Vagina (tissue), 2 donors: ENCODE measurements at regions of chr7 and their contacts with region 1.

Region 1: DNA sequence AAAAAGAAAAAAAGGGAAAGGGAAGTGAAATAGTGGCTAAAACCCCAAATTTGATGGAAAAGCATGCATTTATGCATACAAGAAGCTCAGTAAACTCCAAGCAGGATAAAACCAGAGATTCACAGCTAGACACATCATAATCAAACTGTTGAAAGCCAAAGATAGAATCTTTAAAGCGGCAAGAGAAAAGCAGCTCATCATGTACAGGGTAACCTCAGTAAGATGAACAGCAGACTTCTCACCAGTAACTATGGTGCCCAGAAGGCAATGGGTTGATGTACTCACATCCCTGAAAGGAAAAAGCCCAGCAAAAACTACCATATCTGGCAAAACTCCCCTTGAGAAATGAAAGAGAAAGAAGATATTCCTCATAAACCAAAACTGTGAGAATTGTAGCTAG is 60.4 kb downstream of the TPST1 start:
- DNase-seq: no peak
- H3K4me3 ChIP-seq: no peak overlapping the region
- H3K27ac ChIP-seq: peak overlapping the region; percentile 79
- H3K4me1 ChIP-seq: peaks cover 30% of the 10 kb centered on the region
- H3K27me3 ChIP-seq: no peaks in the 10 kb centered on the region
- CTCF ChIP-seq: no peak
- POLR2A ChIP-seq: no peak

Region 2: GRCh38 chr7:64313740-64314491 is 1951.7 kb before region 1 on chr7 and contains the start of gene ZNF736:
- intact Hi-C with region 1: no loop called
- DNase-seq: peak in 1 of 2 donors; percentile 95
- H3K4me3 ChIP-seq: peak within 1 kb of the TSS; percentile 51 to 74
- H3K27ac ChIP-seq: peak within 1 kb of the TSS; percentile 71
- H3K4me1 ChIP-seq: peaks cover 30% of the 10 kb centered on the region
- H3K27me3 ChIP-seq: no peaks in the 10 kb centered on the region
- CTCF ChIP-seq: no peak
- POLR2A ChIP-seq: peak in 1 of 2 donors; percentile 16
- total RNA-seq, gene ZNF736: 11.3 TPM

Region 3: DNA sequence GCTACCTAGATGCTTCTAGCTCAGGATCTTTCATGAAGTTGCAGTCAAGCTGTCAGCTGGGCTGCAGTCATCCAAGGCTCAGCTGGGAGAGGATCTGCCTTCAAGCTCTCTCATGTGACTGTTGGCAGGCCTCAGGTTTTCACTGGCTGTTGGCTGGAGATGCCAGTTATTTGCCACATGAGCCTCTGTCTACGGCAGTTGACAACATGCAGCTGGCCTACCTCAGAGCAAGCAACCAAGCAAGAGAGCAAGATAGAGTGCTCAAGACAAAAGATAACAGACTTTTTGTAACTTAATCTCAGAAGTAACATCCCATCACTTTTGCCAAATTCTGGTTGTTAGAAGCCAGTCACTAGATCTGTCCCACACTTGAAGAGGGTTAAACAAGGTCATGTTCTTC is 65.4 kb after region 1 on chr7:
- intact Hi-C with region 1: loop called (anchors 10 kb)
- DNase-seq: no peak
- H3K4me3 ChIP-seq: no peak overlapping the region
- H3K27ac ChIP-seq: peak overlapping the region; percentile 5
- H3K4me1 ChIP-seq: peaks cover 5% of the 10 kb centered on the region
- H3K27me3 ChIP-seq: no peaks in the 10 kb centered on the region
- CTCF ChIP-seq: no peak
- POLR2A ChIP-seq: no peak